Dorsolateral prefrontal cortex (tissue), 120 donors: ENCODE measurements at regions of chr11 and their contacts with region 1.

Region 1: GRCh38 chr11:14907411-14908213 is 15.6 kb upstream of the CYP2R1 start:
- DNase-seq: peak; percentile 60 to 84 (median 80)
- H3K4me3 ChIP-seq: no peak overlapping the region
- H3K27ac ChIP-seq: no peak overlapping the region
- H3K27me3 ChIP-seq: peaks cover 0 to 5% (median 0%) of the 10 kb centered on the region in 45 donors
- CTCF ChIP-seq: peak; percentile 38 to 89 (median 80)

Region 2: GRCh38 chr11:14537134-14537599 is 370.4 kb before region 1 on chr11:
- intact Hi-C with region 1: loop called in 1 of 2 experiments (anchors 5 kb)
- DNase-seq: peak in 1 of 10 donors; percentile 44
- H3K4me3 ChIP-seq: peak overlapping the region in 4 of 59 donors; percentile 10 to 37 (median 29)
- H3K27ac ChIP-seq: peak overlapping the region in 3 of 59 donors; percentile 0 to 82 (median 28)
- H3K27me3 ChIP-seq: no peaks in the 10 kb centered on the region
- CTCF ChIP-seq: peak; percentile 58 to 83 (median 76)

Region 3: DNA sequence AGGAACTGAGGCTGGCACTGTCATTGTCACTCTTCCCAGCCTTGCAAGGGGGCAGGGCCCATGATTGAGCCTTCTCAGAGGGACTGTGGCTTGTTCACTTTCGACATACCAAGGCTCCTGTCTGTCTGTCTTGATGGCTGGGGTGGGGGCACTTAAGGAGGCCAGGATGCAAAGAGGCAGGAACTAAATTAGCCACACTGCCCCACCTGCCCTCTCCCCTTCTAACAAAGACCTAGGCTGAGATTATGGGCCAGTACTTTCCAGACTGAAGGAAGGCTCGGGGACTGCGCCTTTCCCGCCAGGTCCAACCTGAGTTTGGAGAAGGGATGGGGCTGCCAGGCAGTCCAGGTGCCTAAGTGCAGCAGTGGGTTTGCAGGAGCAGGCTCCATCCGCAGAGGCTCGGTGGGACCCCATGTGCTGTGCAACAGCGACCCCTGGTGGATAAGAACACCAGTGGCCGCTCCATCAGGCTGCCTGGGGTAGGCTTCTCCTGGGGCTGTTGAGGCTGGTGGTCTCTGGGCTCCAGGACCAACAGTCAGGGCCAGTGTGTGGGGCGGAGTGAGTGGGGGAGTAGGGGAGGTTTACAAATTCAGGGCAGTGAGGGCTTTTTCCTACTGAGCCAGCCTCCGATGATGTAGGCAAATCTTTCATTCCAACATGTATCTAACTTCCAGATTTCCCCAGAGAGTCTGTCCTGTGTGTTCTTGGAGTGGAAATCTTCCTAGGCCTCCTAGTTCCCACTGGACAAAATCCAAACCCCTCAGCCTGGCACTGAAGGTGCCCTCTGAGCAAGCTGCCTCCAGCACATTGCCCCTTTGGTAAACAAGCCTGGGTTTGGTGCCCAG is 301.0 kb after region 1 on chr11:
- intact Hi-C with region 1: loop called (anchors 2 to 5 kb)
- DNase-seq: peak; percentile 45 to 91 (median 78)
- H3K4me3 ChIP-seq: no peak overlapping the region
- H3K27ac ChIP-seq: no peak overlapping the region
- H3K27me3 ChIP-seq: peaks cover 0 to 21% (median 0%) of the 10 kb centered on the region in 45 donors
- CTCF ChIP-seq: peak; percentile 75 to 99 (median 96)